ENCODE measurements at regions of chr3 and their contacts with region 1.

Region 1: GRCh38 chr3:87082796-87083440 is 92.0 kb upstream of the VGLL3 start:
- DNase-seq: peak; percentile 17 to 57
- H3K4me3 ChIP-seq: no peak overlapping the region
- H3K27ac ChIP-seq: no peak overlapping the region
- H3K4me1 ChIP-seq: no peaks in the 10 kb centered on the region
- H3K27me3 ChIP-seq: no peaks in the 10 kb centered on the region
- CTCF ChIP-seq: peak; percentile 77

Region 2: DNA sequence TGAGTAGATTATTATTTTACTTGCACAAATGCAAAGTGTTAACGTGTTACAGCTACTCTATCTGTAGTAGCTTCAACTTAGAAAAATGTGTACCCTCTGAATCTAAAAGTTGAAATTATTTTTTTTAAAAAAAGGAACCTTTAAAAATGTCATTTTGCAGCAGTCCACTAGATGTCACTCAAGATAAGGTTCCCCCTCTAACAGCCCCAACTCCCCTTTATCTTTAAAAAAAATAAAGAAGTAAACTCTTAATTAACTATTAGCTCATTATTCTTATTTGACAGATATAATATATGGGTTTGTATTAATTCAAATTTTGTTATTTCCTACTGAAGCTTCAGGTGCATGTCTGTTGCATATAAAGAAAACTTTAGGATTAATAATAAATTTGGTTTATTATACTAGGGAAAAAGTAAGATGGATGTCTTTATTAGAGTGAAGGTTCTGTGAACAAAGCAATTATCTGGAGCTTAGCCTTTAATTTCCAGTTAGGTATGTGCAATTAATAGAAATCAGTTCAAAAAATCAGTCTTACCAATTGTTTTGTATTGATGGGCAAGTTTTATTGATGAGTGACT is 380.4 kb before region 1 on chr3:
- CTCF ChIA-PET with region 1: no interaction called
- POLR2A ChIA-PET with region 1: no interaction called
- intact Hi-C with region 1: loop called (anchors 5 kb)
- DNase-seq: no peak
- H3K4me3 ChIP-seq: no peak overlapping the region
- H3K27ac ChIP-seq: no peak overlapping the region
- H3K4me1 ChIP-seq: no peaks in the 10 kb centered on the region
- H3K27me3 ChIP-seq: no peaks in the 10 kb centered on the region
- CTCF ChIP-seq: peak; percentile 75

Region 3: DNA sequence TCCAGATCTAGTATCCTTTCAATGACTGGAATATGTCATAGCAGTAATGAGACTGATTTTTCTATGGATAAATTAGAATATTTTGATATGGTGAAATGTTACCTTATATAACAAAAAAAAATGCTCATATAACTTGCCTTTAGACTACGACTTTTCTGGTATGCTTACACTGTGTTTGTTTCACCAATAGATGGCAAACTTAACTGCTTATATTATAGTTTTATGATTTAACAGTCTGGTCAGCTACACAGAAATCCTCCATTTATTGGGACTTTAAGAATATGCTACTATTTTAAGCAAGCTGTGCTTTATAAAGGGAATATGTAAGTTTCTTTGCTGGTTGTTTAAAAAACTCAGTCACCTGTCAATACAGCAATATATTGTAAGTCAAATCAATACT is 297.5 kb before region 1 on chr3:
- CTCF ChIA-PET with region 1: no interaction called
- POLR2A ChIA-PET with region 1: no interaction called
- intact Hi-C with region 1: loop called (anchors 5 kb)
- DNase-seq: no peak
- H3K4me3 ChIP-seq: no peak overlapping the region
- H3K27ac ChIP-seq: no peak overlapping the region
- H3K4me1 ChIP-seq: 0 out of 2 replicates have a peak, but pooled peaks cover 9% of the 10 kb centered on the region
- H3K27me3 ChIP-seq: no peaks in the 10 kb centered on the region
- CTCF ChIP-seq: 0 out of 2 replicates have a peak, but pooled peaks have one; percentile 20

Region 4: GRCh38 chr3:86990734-86991481 is 92.0 kb before region 1 on chr3 and contains the start of gene VGLL3:
- CTCF ChIA-PET with region 1: no interaction called
- POLR2A ChIA-PET with region 1: interaction called, 6 read pairs
- intact Hi-C with region 1: loop called (anchors 1 kb)
- DNase-seq: peak; percentile 62 to 88
- H3K4me3 ChIP-seq: peak within 1 kb of the TSS; percentile 67
- H3K27ac ChIP-seq: peak within 1 kb of the TSS; percentile 69
- H3K4me1 ChIP-seq: peaks cover 49% of the 10 kb centered on the region
- H3K27me3 ChIP-seq: no peaks in the 10 kb centered on the region
- CTCF ChIP-seq: no peak; the same call in 1 of the 2 replicates
- total RNA-seq, gene VGLL3: 20.5 and 26.8 TPM in 2 replicates

Region 5: GRCh38 chr3:87167628-87168456 is 84.9 kb after region 1 on chr3:
- CTCF ChIA-PET with region 1: no interaction called
- POLR2A ChIA-PET with region 1: no interaction called
- intact Hi-C with region 1: loop called (anchors 2 kb)
- DNase-seq: peak in 1 of 2 experiments; percentile 20
- H3K4me3 ChIP-seq: peak overlapping the region; percentile 39; the same call in 1 of the 2 replicates
- H3K27ac ChIP-seq: no peak overlapping the region
- H3K4me1 ChIP-seq: no peaks in the 10 kb centered on the region
- H3K27me3 ChIP-seq: no peaks in the 10 kb centered on the region
- CTCF ChIP-seq: peak; percentile 77

Region 6: DNA sequence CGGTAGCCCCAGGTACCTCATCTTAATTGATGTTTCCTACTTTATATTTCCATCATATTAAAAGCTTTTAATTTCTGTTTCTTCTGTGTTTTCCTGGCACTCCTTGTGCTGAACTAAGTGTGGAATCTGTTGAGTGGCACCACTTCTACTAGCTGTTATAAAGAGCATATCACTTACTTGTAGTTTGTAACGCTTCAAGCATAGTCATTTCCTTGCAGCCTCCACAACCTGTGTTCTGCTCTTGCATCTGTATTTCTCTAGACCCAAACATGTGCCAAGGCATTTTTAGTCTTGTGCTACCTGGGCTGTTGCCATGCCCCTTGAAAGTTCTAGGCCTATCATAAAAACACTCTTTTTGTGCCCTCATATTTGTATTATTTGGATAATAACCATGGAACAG is 992.2 kb after region 1 on chr3:
- CTCF ChIA-PET with region 1: no interaction called
- POLR2A ChIA-PET with region 1: no interaction called
- intact Hi-C with region 1: no loop called
- DNase-seq: no peak
- H3K4me3 ChIP-seq: no peak overlapping the region
- H3K27ac ChIP-seq: no peak overlapping the region
- H3K4me1 ChIP-seq: no peaks in the 10 kb centered on the region
- H3K27me3 ChIP-seq: no peaks in the 10 kb centered on the region
- CTCF ChIP-seq: no peak

Measured in PC-9 (cell line).